Mammary epithelial cell (primary cell): ENCODE measurements at regions of chr3 and their contacts with region 1.

Region 1: DNA sequence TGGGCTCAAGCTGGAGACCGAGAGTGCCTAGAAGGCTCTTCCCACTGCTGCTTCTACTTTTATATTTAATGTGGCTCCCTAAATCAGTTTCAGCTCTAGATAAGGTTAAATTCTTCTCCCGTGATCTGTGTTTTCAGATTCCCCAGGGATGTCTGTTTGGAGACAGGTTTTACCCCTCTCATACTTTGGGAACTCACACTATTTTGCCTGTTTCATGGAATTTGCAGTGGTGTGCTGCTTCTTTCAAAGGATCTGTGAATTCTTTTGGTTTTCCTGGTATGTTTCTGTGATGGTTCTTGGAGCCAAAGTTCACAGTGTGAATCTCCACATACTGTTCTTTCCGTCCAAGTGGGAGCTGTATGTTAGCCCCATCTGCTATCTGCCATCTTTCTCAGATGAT is 238.3 kb upstream of the SLITRK3 start:
- DNase-seq: no peak
- H3K4me3 ChIP-seq: no peak overlapping the region
- H3K27ac ChIP-seq: no peak overlapping the region
- H3K4me1 ChIP-seq: peaks cover under 1% of the 10 kb centered on the region
- H3K27me3 ChIP-seq: no peaks in the 10 kb centered on the region
- CTCF ChIP-seq: no peak

Region 2: GRCh38 chr3:165459924-165460835 is 25.7 kb after region 1 on chr3:
- CTCF ChIA-PET with region 1: no interaction called
- dilution Hi-C with region 1: no loop called
- in situ Hi-C with region 1: no loop called
- intact Hi-C with region 1: loop called (anchors 1 kb)
- DNase-seq: peak; percentile 41
- H3K4me3 ChIP-seq: peak overlapping the region; percentile 47 to 79 (median 75)
- H3K27ac ChIP-seq: peak overlapping the region; percentile 93
- H3K4me1 ChIP-seq: peaks cover 12% of the 10 kb centered on the region
- H3K27me3 ChIP-seq: no peaks in the 10 kb centered on the region
- CTCF ChIP-seq: no peak